ENCODE measurements at regions of chr6 and their contacts with region 1.

Region 1: GRCh38 chr6:134822920-134823709 is 126.8 kb downstream of the ALDH8A1 start:
- DNase-seq: peak; percentile 87
- H3K4me3 ChIP-seq: no peak overlapping the region
- H3K27ac ChIP-seq: no peak overlapping the region
- H3K4me1 ChIP-seq: peaks cover 20% of the 10 kb centered on the region
- H3K27me3 ChIP-seq: no peaks in the 10 kb centered on the region
- CTCF ChIP-seq: peak; percentile 89

Region 2: GRCh38 chr6:134111062-134111677 is 711.9 kb before region 1 on chr6:
- CTCF ChIA-PET with region 1: no interaction called
- POLR2A ChIA-PET with region 1: no interaction called
- intact Hi-C with region 1: loop called (anchors 5 kb)
- DNase-seq: peak; percentile 89
- H3K4me3 ChIP-seq: no peak overlapping the region
- H3K27ac ChIP-seq: no peak overlapping the region
- H3K4me1 ChIP-seq: no peaks in the 10 kb centered on the region
- H3K27me3 ChIP-seq: no peaks in the 10 kb centered on the region
- CTCF ChIP-seq: peak; percentile 97

Region 3: GRCh38 chr6:134161036-134161435 is 662.1 kb before region 1 on chr6:
- CTCF ChIA-PET with region 1: interaction called, 6 read pairs
- POLR2A ChIA-PET with region 1: no interaction called
- intact Hi-C with region 1: loop called (anchors 1 kb)
- DNase-seq: no peak
- H3K4me3 ChIP-seq: no peak overlapping the region
- H3K27ac ChIP-seq: no peak overlapping the region
- H3K4me1 ChIP-seq: no peaks in the 10 kb centered on the region
- H3K27me3 ChIP-seq: no peaks in the 10 kb centered on the region
- CTCF ChIP-seq: no peak

Region 4: DNA sequence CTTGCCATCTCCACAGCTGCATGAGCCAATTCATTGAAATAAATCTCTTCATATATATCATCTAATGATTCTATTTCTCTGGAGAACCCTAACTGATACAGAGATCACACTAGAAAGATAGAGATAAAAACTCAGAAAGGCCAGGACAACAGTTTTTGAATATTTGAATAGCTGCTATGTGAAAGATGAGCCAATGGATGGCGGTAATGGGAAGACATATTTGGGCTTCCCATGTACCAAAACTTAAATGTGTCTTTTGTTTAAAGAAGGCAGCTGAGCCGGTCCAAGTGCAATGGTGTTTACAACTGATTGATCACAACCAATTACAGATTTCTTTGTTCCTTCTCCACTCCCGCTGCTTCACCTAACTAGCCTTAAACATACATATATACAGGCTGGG is 540.3 kb before region 1 on chr6:
- CTCF ChIA-PET with region 1: no interaction called
- POLR2A ChIA-PET with region 1: no interaction called
- intact Hi-C with region 1: loop called (anchors 5 kb)
- DNase-seq: peak; percentile 15
- H3K4me3 ChIP-seq: no peak overlapping the region
- H3K27ac ChIP-seq: no peak overlapping the region
- H3K4me1 ChIP-seq: peaks cover 3% of the 10 kb centered on the region
- H3K27me3 ChIP-seq: no peaks in the 10 kb centered on the region
- CTCF ChIP-seq: peak; percentile 33; the same call in 1 of the 2 replicates

Region 5: DNA sequence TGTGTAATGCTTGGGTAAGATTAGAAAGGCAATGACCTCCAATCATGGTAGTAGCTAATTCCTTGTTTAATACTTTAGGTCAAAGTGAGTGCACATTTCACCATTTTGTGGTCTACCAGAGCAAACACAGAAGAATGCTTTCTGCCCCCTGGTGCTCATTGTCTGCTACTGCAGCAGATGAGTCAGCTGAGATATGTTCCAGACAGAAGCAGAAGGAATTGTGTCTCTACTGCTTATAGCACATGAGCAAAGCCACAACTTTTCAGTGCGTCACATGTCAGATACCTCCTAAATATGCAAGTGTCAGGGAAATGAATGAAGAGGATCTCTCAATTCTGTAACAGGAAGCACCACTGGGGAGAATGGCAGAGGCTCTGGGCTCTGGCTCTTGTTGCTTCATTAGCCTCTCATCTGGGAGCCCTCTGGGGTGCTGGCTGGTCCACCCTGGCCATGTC is 182.1 kb before region 1 on chr6:
- CTCF ChIA-PET with region 1: interaction called, 4 read pairs
- POLR2A ChIA-PET with region 1: no interaction called
- intact Hi-C with region 1: loop called (anchors 5 kb)
- DNase-seq: peak; percentile 94
- H3K4me3 ChIP-seq: no peak overlapping the region
- H3K27ac ChIP-seq: peak overlapping the region; percentile 7
- H3K4me1 ChIP-seq: peaks cover 26% of the 10 kb centered on the region
- H3K27me3 ChIP-seq: no peaks in the 10 kb centered on the region
- CTCF ChIP-seq: peak; percentile 95

Region 6: DNA sequence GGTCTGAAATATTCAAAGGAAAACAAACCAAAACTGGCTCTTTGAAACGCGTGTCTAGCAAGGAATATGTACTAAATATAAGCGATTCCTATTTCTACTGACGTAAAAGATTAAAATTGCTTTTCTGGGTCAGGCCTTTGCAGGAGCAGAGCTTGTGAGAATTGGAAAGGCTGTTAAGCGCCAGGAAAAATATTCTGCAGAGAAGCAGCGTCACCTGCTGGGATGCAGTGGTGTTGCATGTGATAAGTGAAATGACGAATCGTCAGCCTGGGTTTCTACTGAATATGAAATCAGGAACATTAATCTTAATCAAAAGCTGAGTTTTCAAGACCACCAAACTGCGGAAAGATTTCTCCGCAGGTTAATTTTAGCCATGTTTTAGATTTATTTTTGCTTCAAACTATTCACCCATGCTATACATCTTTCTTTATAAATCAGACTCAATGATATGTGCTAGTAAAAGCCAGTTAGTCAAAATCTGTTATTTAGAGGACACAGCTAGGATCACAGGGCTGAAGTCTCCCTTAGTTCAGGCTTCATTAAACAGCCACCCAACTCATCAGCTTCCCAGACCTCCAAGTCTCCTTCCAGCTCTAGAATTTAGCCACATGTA is 59.4 kb after region 1 on chr6:
- CTCF ChIA-PET with region 1: interaction called, 17 read pairs
- POLR2A ChIA-PET with region 1: no interaction called
- intact Hi-C with region 1: no loop called
- DNase-seq: peak; percentile 82
- H3K4me3 ChIP-seq: no peak overlapping the region
- H3K27ac ChIP-seq: no peak overlapping the region
- H3K4me1 ChIP-seq: peaks cover 9% of the 10 kb centered on the region
- H3K27me3 ChIP-seq: no peaks in the 10 kb centered on the region
- CTCF ChIP-seq: peak; percentile 96

Region 7: GRCh38 chr6:136274062-136274461 is 1450.9 kb after region 1 on chr6:
- CTCF ChIA-PET with region 1: no interaction called
- POLR2A ChIA-PET with region 1: no interaction called
- intact Hi-C with region 1: no loop called
- DNase-seq: no peak
- H3K4me3 ChIP-seq: no peak overlapping the region
- H3K27ac ChIP-seq: no peak overlapping the region
- H3K4me1 ChIP-seq: no peaks in the 10 kb centered on the region
- H3K27me3 ChIP-seq: no peaks in the 10 kb centered on the region
- CTCF ChIP-seq: no peak

Measured in A673 (cell line).